ENCODE measurements at regions of chr14 and their contacts with region 1.

Region 1: DNA sequence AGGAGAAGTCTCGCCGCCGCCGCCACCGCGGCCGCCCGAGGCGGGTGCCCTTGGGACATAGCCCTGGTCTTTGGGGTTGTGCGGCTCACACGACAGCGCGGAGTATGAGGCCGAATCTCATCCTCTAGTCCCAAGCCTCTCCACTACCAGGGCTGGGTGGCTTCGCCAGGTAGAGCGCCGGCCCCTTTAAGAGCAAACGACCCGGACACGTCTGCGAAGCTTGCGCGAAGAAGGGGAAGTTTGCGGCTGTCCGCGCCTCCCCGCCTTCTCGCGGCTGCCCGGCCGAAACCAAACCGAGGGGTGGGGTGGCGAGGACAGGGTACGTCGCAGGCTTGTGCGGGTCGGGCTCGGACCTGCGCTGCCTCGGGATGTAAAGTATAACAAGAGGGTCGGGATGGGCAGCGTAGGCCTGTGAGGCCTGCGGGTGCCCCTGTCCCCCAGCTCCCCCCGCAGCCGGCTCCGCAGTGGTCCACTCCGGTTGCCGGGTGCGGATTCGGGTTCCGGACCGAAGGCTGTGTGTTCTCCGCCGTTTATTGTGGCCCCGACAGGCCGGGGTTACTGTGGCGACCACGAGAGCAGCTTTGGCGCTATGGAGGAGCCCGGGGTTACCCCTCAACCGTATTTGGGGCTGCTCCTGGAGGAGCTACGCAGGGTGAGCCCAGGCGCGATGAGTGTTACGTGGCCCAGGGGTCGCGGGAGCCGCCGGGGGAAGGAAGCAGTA is 33.3 kb downstream of the MIA2 start:
- DNase-seq: no peak
- ATAC-seq: peak; percentile 96
- H3K4me3 ChIP-seq: peak overlapping the region; percentile 76 to 88
- H3K27ac ChIP-seq: peak overlapping the region; percentile 95
- H3K4me1 ChIP-seq: peaks cover 17% of the 10 kb centered on the region
- H3K27me3 ChIP-seq: no peaks in the 10 kb centered on the region
- CTCF ChIP-seq: no peak

Region 2: DNA sequence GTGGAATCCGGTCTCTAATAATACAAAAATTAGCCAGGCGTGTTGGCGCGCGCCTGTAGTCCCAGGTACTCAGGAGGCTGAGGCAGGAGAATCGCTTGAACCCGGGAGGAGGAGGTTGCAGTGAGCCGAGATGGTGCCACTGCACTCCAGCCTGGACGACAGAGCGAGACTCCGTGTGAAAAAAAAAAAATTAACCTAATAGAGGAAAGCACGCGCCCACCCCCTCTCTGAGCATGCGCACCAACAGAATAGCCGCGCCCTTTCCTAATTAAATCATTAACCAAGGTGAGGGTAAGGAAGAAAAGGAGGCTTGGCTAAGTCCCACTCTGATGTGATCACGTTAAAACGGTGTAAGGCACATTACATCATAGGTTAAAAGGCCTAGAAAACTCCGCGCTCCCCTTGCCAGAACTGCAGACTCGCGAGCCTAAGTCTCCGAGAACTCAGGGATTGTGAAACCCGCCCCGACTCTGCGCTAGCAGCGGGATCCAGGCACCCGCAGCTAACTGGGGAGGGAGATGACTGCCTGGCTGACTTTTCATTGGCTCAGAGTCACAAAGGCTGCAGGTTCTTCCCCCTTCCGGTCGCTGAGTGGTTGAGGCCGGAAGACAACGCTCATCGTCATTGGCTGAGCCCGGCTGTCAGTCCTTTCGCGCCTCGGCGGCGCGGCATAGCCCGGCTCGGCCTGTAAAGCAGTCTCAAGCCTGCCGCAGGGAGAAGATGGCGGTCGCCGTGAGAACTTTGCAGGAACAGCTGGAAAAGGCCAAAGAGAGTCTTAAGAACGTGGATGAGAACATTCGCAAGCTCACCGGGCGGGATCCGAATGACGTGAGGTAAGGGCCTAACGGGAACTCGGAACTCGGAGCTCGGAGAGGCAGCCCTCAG is 92.2 kb before region 1 on chr14 and contains the start of gene PNN:
- CTCF ChIA-PET with region 1: no interaction called
- POLR2A ChIA-PET with region 1: interaction called, 20 read pairs
- in situ Hi-C with region 1: no loop called
- intact Hi-C with region 1: loop called (anchors 10 kb)
- DNase-seq: peak; percentile 97
- ATAC-seq: peak; percentile 95
- H3K4me3 ChIP-seq: peak within 1 kb of the TSS; percentile 92 to 95
- H3K27ac ChIP-seq: peak within 1 kb of the TSS; percentile 97
- H3K4me1 ChIP-seq: peaks cover 22% of the 10 kb centered on the region
- H3K27me3 ChIP-seq: no peaks in the 10 kb centered on the region
- CTCF ChIP-seq: no peak
- total RNA-seq, gene PNN: 55.4 TPM

Region 3: GRCh38 chr14:39181026-39181692 is 85.9 kb before region 1 on chr14:
- CTCF ChIA-PET with region 1: no interaction called
- POLR2A ChIA-PET with region 1: interaction called, 20 read pairs
- in situ Hi-C with region 1: no loop called
- intact Hi-C with region 1: loop called (anchors 10 kb)
- DNase-seq: no peak
- ATAC-seq: no peak
- H3K4me3 ChIP-seq: no peak overlapping the region
- H3K27ac ChIP-seq: no peak overlapping the region
- H3K4me1 ChIP-seq: peaks cover 13% of the 10 kb centered on the region
- H3K27me3 ChIP-seq: no peaks in the 10 kb centered on the region
- CTCF ChIP-seq: no peak

Region 4: DNA sequence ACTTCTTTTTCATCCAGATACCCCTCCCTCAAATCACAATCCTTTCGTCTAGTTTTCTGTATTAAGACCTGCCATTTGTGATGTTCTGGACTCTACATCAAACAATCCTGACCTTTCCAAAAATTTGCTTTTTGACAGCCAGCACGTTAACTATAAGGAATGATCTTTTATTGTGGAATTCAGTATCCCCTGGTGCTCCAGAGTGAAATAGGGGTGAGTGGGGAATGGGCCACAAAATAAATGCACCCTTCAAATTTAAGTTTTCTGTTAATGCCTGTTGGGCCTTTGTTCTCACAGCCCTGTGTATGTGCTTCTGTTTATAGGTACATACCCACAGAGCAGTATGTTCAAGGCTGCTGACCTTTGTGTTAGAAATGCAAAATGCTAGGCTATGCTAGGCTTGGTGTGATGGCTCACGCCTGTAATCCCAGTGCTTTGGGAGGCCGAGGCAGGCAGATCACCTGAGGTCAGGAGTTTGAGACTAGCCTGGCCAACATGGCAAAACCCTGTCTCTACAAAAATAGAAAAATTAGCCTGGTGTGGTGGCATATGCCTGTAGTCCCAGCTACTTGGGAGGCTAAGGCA is 80.0 kb before region 1 on chr14:
- CTCF ChIA-PET with region 1: no interaction called
- POLR2A ChIA-PET with region 1: interaction called, 10 read pairs
- in situ Hi-C with region 1: no loop called
- intact Hi-C with region 1: loop called (anchors 10 kb)
- DNase-seq: no peak
- ATAC-seq: peak; percentile 60
- H3K4me3 ChIP-seq: no peak overlapping the region
- H3K27ac ChIP-seq: no peak overlapping the region
- H3K4me1 ChIP-seq: peaks cover 5% of the 10 kb centered on the region
- H3K27me3 ChIP-seq: no peaks in the 10 kb centered on the region
- CTCF ChIP-seq: no peak

Region 5: DNA sequence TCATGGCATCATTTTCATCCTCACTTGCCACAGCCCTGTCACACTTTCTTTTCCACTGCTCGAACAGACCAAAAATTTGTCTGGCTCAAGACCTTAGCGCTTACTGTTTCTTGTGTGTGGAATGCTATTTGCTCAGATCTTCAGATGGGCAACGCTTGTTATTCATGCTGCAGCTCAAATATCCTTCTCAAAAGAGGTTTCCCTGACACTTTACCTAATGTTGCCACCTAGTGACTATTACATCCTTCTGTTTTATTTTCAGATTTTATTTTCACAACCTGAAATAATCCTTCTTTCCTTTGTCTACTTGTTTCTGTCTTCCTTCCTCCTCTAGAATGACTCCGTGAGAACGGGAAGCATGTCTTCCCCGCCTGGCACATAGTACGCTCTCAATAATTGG is 159.6 kb after region 1 on chr14:
- CTCF ChIA-PET with region 1: no interaction called
- POLR2A ChIA-PET with region 1: no interaction called
- in situ Hi-C with region 1: no loop called
- intact Hi-C with region 1: no loop called
- DNase-seq: peak; percentile 17
- ATAC-seq: no peak
- H3K4me3 ChIP-seq: no peak overlapping the region
- H3K27ac ChIP-seq: no peak overlapping the region
- H3K4me1 ChIP-seq: peaks cover 14% of the 10 kb centered on the region
- H3K27me3 ChIP-seq: no peaks in the 10 kb centered on the region
- CTCF ChIP-seq: peak; percentile 47

Measured in Panc1 (cell line).